ENCODE measurements at regions of chr1 and their contacts with region 1.

Region 1: DNA sequence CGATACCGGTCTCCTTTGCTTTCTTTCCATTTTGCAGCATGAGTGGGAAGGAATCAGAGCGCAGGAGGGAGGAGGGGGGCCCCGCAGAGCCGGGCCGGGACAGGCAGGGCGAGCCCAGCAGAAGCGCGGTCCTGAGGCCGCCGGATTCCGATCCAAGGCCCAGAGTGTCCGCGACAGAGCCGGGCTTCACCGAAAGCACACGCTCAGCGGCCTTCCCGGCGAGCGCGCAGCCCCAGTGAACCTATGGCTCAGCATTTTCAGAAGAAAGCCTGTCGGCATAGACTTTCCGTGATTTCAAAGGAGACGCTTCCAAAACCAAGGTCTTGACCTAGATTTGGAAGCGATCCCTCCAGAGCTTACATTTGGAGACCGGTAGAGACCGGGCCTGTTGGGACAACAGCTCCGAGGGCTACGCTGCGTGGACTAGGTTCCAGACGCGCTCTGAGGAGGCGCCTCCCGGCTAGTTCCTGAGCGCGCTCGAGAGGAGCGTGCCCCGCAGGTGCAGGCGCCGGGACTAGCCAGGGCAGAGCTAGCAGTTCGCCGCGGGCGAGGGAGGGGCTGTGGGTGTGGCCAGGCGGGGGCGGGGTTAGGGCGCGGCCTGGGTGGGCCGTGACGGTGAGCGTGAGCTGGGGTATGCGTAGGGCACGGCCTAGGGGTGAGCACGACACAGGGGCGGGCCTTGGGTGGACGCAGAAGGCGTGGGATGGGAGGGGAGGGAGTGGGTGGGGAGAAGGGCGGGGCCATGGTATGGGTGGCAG is 27.8 kb upstream of the PRSS38 start:
- DNase-seq: peak; percentile 92 to 98 (median 95)
- ATAC-seq: peak; percentile 93
- H3K4me3 ChIP-seq: peak overlapping the region; percentile 75 to 97
- H3K4me3 Mint-ChIP-seq: peak overlapping the region; percentile 83
- H3K27ac ChIP-seq: peak overlapping the region in 1 of 2 experiments; percentile 52
- H3K27ac Mint-ChIP-seq: peak overlapping the region; percentile 71
- H3K4me1 ChIP-seq: peaks cover 21% of the 10 kb centered on the region
- H3K4me1 Mint-ChIP-seq: peaks cover 21% of the 10 kb centered on the region
- H3K27me3 ChIP-seq: peaks cover 0 to 5% of the 10 kb centered on the region in 2 experiments
- H3K27me3 Mint-ChIP-seq: no peaks in the 10 kb centered on the region
- CTCF ChIP-seq: no peak

Region 2: DNA sequence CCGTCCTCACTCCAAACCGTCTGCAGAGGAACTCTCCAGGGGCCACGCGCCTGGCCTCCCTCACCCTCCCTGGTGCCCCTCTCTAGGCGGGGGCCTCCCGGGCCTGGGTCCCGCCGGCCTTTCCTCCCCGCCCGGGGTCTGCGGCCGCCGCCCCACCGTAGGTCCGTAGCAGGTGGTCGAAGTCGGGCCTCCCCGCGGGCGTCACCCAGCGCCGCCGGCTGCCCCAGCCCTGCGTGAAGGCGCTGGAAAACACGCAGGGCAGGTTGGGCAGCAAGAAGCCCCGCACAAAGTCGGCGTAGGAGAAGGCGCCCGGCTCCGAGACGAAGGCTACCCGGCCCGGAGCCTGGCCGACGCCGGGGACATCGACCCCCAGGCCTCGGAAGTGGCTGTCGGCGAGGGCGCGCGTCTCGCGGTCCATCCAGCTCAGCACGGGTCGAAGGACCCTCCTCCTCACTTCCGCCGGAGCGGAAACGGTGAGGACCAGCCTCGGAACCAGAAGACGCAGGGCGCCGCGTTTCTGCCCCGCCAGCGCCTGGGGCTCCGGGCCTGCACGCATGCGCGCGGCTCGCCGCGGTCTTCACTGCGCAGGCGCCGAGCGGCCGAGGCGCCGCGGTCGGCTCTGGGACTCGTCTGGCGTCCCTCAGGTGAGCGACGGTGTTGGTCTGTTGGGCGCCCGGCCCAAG is 52.7 kb before region 1 on chr1 and contains the starts of genes JMJD4 and SNAP47:
- CTCF ChIA-PET with region 1: no interaction called
- POLR2A ChIA-PET with region 1: no interaction called
- intact Hi-C with region 1: loop called (anchors 1 to 2 kb)
- DNase-seq: peak; percentile 82 to 97 (median 92)
- ATAC-seq: peak; percentile 89
- H3K4me3 ChIP-seq: peak within 1 kb of the TSS; percentile 71 to 95
- H3K4me3 Mint-ChIP-seq: peak within 1 kb of the TSS; percentile 89
- H3K27ac ChIP-seq: peak within 1 kb of the TSS; percentile 71 to 76
- H3K27ac Mint-ChIP-seq: peak within 1 kb of the TSS; percentile 88
- H3K4me1 ChIP-seq: peaks cover 19% of the 10 kb centered on the region
- H3K4me1 Mint-ChIP-seq: peaks cover 51% of the 10 kb centered on the region
- H3K27me3 ChIP-seq: no peaks in the 10 kb centered on the region
- H3K27me3 Mint-ChIP-seq: no peaks in the 10 kb centered on the region
- CTCF ChIP-seq: no peak
- total RNA-seq, gene JMJD4: 7.4 to 9.5 TPM
- total RNA-seq, gene SNAP47: 11.0 to 13.8 TPM

Region 3: DNA sequence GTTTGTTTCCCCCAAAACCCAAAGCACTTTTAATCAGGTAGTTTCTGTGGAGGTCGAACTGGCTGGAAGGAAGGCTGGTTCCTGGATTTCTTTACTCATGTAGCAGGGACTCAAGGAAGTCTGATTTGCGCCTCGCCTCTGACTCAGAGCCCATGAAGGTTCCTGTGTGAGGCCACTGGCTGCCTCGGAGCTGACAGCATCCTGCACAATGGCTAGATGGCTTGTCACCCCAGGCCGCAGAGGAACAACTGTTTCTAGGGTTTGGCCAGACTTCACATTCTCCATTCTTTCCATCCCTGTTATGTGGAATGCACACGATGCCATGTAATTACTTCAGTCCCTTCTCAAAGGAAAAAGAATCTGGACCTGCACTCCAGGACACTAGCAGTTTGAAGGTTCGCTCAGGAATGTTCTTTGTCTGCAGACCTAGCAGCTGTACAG is 11.3 kb before region 1 on chr1:
- CTCF ChIA-PET with region 1: interaction called, 6 read pairs
- POLR2A ChIA-PET with region 1: interaction called, 23 read pairs
- intact Hi-C with region 1: loop called (anchors 1 kb)
- DNase-seq: peak in 2 of 9 experiments; percentile 23 to 36
- ATAC-seq: no peak
- H3K4me3 ChIP-seq: no peak overlapping the region
- H3K4me3 Mint-ChIP-seq: no peak overlapping the region
- H3K27ac ChIP-seq: no peak overlapping the region
- H3K27ac Mint-ChIP-seq: no peak overlapping the region
- H3K4me1 ChIP-seq: peaks cover 35% of the 10 kb centered on the region
- H3K4me1 Mint-ChIP-seq: peaks cover 33% of the 10 kb centered on the region
- H3K27me3 ChIP-seq: no peaks in the 10 kb centered on the region
- H3K27me3 Mint-ChIP-seq: no peaks in the 10 kb centered on the region
- CTCF ChIP-seq: no peak

Region 4: GRCh38 chr1:227886993-227887696 is 99.5 kb after region 1 on chr1:
- CTCF ChIA-PET with region 1: no interaction called
- POLR2A ChIA-PET with region 1: interaction called, 3 read pairs
- intact Hi-C with region 1: loop called in 1 of 2 experiments (anchors 5 kb)
- DNase-seq: peak in 7 of 9 experiments; percentile 21 to 68 (median 43)
- ATAC-seq: peak; percentile 41
- H3K4me3 ChIP-seq: peak overlapping the region; percentile 22 to 48
- H3K4me3 Mint-ChIP-seq: peak overlapping the region; percentile 71
- H3K27ac ChIP-seq: no peak overlapping the region
- H3K27ac Mint-ChIP-seq: peak overlapping the region; percentile 83
- H3K4me1 ChIP-seq: peaks cover 59% of the 10 kb centered on the region
- H3K4me1 Mint-ChIP-seq: peaks cover 41% of the 10 kb centered on the region
- H3K27me3 ChIP-seq: no peaks in the 10 kb centered on the region
- H3K27me3 Mint-ChIP-seq: no peaks in the 10 kb centered on the region
- CTCF ChIP-seq: no peak

Region 5: GRCh38 chr1:228102791-228103620 is 315.3 kb after region 1 on chr1 and contains the start of gene C1orf35:
- CTCF ChIA-PET with region 1: no interaction called
- POLR2A ChIA-PET with region 1: no interaction called
- intact Hi-C with region 1: loop called in 1 of 2 experiments (anchors 5 kb)
- DNase-seq: peak; percentile 81 to 96 (median 94)
- ATAC-seq: peak; percentile 85
- H3K4me3 ChIP-seq: peak within 1 kb of the TSS; percentile 72 to 77
- H3K4me3 Mint-ChIP-seq: peak within 1 kb of the TSS; percentile 95
- H3K27ac ChIP-seq: peak within 1 kb of the TSS; percentile 80 to 91
- H3K27ac Mint-ChIP-seq: peak within 1 kb of the TSS; percentile 95
- H3K4me1 ChIP-seq: peaks cover 21% of the 10 kb centered on the region
- H3K4me1 Mint-ChIP-seq: peaks cover 25% of the 10 kb centered on the region
- H3K27me3 ChIP-seq: no peaks in the 10 kb centered on the region
- H3K27me3 Mint-ChIP-seq: no peaks in the 10 kb centered on the region
- CTCF ChIP-seq: no peak
- total RNA-seq, gene C1orf35: 28.4 to 30.2 TPM